ENCODE measurements at regions of chr7 and their contacts with region 1.

Region 1: GRCh38 chr7:7103343-7104313 is 78.7 kb upstream of the C1GALT1 start:
- DNase-seq: no peak
- ATAC-seq: peak; percentile 71
- H3K4me3 Mint-ChIP-seq: no peak overlapping the region
- H3K27ac Mint-ChIP-seq: no peak overlapping the region
- H3K4me1 Mint-ChIP-seq: peaks cover 4% of the 10 kb centered on the region
- H3K27me3 Mint-ChIP-seq: no peaks in the 10 kb centered on the region
- CTCF ChIP-seq: no peak

Region 2: DNA sequence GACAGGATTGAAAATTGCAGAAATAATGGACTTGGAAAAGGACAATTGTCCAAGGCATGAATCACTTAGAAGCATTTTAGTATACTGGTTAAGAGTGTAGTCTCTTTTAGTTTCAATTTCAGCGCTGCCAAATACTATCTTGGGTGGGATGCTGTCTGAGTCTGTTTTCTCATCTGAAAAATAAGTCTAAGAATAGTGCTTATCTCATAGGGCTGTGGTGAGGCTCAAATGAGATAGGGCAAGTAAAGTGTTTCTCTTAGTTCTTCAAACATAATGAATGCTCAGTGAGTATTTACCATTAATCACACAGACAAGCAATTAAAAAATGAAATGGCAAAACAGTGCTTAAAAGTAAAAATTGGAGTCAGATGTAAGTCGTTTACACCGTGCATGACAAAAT is 32.8 kb after region 1 on chr7:
- CTCF ChIA-PET with region 1: no interaction called
- POLR2A ChIA-PET with region 1: no interaction called
- intact Hi-C with region 1: no loop called
- DNase-seq: no peak
- ATAC-seq: peak; percentile 21
- H3K4me3 Mint-ChIP-seq: no peak overlapping the region
- H3K27ac Mint-ChIP-seq: peak overlapping the region; percentile 38
- H3K4me1 Mint-ChIP-seq: peaks cover 14% of the 10 kb centered on the region
- H3K27me3 Mint-ChIP-seq: no peaks in the 10 kb centered on the region
- CTCF ChIP-seq: no peak

Region 3: DNA sequence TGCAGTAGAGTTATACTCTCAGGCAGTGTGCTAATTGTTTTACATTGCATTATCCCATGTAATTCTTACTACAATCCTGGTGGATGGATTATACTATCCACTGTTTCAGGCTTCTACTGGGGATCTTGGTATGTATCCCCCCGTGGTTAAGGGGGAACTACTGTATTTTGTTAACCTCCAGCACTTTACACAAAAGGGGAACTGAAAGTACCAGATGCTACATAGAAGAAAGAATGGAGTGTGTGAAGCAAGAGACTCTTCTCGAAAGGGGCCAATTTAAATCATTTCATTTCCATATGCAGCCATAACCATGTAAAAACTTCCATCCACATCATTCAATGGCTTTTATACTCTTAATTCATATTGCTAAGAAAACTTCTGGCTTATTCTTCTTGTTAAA is 148.1 kb after region 1 on chr7:
- CTCF ChIA-PET with region 1: no interaction called
- POLR2A ChIA-PET with region 1: no interaction called
- intact Hi-C with region 1: loop called (anchors 1 kb)
- DNase-seq: no peak
- ATAC-seq: peak; percentile 96
- H3K4me3 Mint-ChIP-seq: peak overlapping the region; percentile 49
- H3K27ac Mint-ChIP-seq: peak overlapping the region; percentile 96
- H3K4me1 Mint-ChIP-seq: peaks cover 85% of the 10 kb centered on the region
- H3K27me3 Mint-ChIP-seq: no peaks in the 10 kb centered on the region
- CTCF ChIP-seq: no peak

Region 4: GRCh38 chr7:7424151-7424873 is 320.7 kb after region 1 on chr7:
- CTCF ChIA-PET with region 1: interaction called, 20 read pairs
- POLR2A ChIA-PET with region 1: no interaction called
- intact Hi-C with region 1: loop called (anchors 1 kb)
- DNase-seq: no peak
- ATAC-seq: peak; percentile 75
- H3K4me3 Mint-ChIP-seq: peak overlapping the region; percentile 86
- H3K27ac Mint-ChIP-seq: peak overlapping the region; percentile 37
- H3K4me1 Mint-ChIP-seq: peaks cover 6% of the 10 kb centered on the region
- H3K27me3 Mint-ChIP-seq: no peaks in the 10 kb centered on the region
- CTCF ChIP-seq: no peak

Region 5: DNA sequence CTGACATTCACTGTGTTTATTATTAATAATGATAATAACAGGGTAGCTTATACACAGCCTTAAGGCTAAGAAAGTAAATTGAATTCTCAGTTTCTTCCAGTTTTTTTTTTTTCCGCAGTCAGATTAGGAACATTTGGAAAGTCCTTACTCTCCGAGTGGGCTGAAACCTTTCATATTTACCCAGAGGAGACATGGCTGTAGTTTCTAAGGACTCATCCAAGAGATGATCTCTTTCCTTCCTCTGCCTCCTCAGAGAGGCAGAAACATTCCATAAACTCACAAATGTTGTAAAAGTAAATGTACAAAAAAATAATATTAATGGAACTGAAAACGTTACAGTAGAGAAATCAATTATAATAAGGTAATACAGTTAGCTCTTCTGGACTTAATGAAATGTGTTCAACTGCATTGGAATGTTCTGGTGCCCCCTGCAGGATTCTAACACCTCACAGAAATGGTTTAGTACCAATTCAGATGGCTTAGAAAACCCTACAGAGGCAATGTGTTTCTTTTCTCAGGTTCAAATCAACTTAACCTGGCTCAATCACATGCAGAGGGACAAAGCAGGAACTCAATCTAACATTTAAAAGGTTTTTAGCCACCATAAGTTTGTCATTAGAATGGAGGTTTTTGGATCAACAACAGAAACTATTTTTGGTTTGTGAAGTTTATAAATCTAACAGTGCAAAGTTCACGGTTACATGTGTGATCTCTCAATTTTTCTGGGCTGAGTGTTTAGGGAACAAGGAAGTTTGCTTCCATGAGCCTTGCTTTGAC is 1086.7 kb after region 1 on chr7:
- CTCF ChIA-PET with region 1: interaction called, 4 read pairs
- POLR2A ChIA-PET with region 1: no interaction called
- intact Hi-C with region 1: loop called (anchors 1 kb)
- DNase-seq: no peak
- ATAC-seq: peak; percentile 87
- H3K4me3 Mint-ChIP-seq: no peak overlapping the region
- H3K27ac Mint-ChIP-seq: no peak overlapping the region
- H3K4me1 Mint-ChIP-seq: peaks cover 20% of the 10 kb centered on the region
- H3K27me3 Mint-ChIP-seq: no peaks in the 10 kb centered on the region
- CTCF ChIP-seq: no peak

Measured in activated B cell treated with CpG ODN at 0.5 μM for 24 hours (primary cell).